ENCODE measurements at regions of chr19 and their contacts with region 1.

Region 1: DNA sequence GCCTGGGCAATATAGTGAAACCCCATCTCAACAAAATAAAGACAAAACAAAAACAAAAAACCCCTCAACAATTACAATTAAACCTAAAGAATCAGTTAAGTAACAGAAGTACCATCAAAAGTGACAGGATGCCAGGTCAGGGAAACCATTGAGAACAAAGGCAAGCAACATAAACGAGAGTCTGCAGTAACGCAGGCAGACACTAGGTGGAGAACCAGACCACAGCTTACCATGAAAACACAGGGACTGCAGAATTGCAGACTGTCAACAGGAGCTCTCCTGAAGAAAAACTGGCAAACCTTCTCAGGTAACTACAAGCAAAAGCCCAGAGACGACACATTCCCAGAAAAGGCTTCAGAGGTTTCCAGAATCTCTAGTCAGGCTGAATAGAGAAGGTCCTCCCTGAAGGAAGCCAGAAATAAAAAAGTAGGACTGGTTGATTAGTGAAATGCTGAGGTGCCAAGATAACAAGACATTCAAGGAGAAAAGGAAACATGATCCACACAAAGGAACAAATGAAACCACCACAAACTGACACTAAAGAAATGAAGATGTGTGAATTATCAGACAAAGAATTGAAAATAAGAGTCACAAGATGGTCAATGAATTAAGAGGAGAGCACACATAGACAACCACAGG is 2.2 kb upstream of the ZNF665 start:
- H3K4me3 Mint-ChIP-seq: no peak overlapping the region
- H3K27ac Mint-ChIP-seq: no peak overlapping the region
- H3K4me1 Mint-ChIP-seq: peaks cover 26% of the 10 kb centered on the region
- H3K27me3 Mint-ChIP-seq: peaks cover 3% of the 10 kb centered on the region

Region 2: GRCh38 chr19:52904052-52904451 is 291.3 kb before region 1 on chr19:
- intact Hi-C with region 1: no loop called
- H3K4me3 Mint-ChIP-seq: no peak overlapping the region
- H3K27ac Mint-ChIP-seq: no peak overlapping the region
- H3K4me1 Mint-ChIP-seq: no peaks in the 10 kb centered on the region
- H3K27me3 Mint-ChIP-seq: no peaks in the 10 kb centered on the region

Region 3: DNA sequence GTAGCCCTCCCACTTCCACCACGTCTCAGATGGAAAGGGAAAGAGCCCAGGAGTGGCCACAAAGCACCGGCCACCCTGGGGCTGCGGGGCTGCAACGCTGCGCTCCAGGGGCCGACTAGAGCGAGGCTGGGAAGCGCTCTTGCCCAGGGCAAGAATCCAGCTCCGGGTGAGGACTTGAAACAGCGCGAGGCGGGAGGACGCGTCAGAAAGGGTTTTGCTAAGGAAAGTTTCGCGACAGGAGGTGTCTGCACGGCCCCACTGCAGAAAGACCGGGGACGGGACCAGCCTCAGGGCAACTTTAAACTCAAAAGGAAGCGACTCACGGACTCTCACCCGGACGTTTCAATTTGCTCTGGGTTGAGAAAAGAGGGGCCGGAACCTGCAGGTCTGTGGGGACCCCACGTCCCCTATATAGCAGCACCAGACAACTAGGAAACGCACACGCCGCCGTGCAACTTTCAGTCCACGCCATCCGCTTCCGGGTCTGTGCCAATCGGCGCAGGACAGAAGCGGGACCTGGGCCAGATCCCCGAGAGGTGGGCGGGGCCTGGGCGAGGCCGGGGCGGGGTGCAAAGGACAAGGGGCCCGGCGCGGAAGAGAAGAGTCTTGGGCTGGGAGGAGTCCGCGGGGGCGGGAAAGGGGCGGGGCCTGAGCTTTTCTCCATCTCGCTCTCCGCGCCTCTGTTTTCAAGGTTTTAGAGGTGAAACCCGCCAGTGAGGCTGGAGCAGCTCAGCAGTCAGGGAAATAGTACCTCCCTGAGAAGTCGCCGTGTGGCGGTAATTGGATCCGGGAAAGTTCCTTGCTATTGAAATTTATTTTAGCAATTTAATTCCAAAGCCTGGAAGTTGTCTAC is 232.8 kb before region 1 on chr19 and contains the start of gene ZNF816:
- intact Hi-C with region 1: loop called (anchors 10 kb)
- H3K4me3 Mint-ChIP-seq: peak within 1 kb of the TSS; percentile 99
- H3K27ac Mint-ChIP-seq: peak within 1 kb of the TSS; percentile 91
- H3K4me1 Mint-ChIP-seq: peaks cover 20% of the 10 kb centered on the region
- H3K27me3 Mint-ChIP-seq: no peaks in the 10 kb centered on the region

Region 4: GRCh38 chr19:53158119-53158656 is 37.2 kb before region 1 on chr19:
- intact Hi-C with region 1: loop called (anchors 5 kb)
- H3K4me3 Mint-ChIP-seq: peak overlapping the region; percentile 80
- H3K27ac Mint-ChIP-seq: peak overlapping the region; percentile 68
- H3K4me1 Mint-ChIP-seq: peaks cover 19% of the 10 kb centered on the region
- H3K27me3 Mint-ChIP-seq: peaks cover 2% of the 10 kb centered on the region

Region 5: GRCh38 chr19:53333463-53334449 is 138.4 kb after region 1 on chr19 and contains the start of gene ZNF845:
- intact Hi-C with region 1: loop called (anchors 10 kb)
- H3K4me3 Mint-ChIP-seq: peak within 1 kb of the TSS; percentile 81
- H3K27ac Mint-ChIP-seq: peak within 1 kb of the TSS; percentile 86
- H3K4me1 Mint-ChIP-seq: peaks cover 17% of the 10 kb centered on the region
- H3K27me3 Mint-ChIP-seq: peaks cover 1% of the 10 kb centered on the region

Region 6: GRCh38 chr19:53394974-53395839 is 199.8 kb after region 1 on chr19 and contains the start of gene ZNF765:
- intact Hi-C with region 1: loop called (anchors 1 kb)
- H3K4me3 Mint-ChIP-seq: peak within 1 kb of the TSS; percentile 91
- H3K27ac Mint-ChIP-seq: peak within 1 kb of the TSS; percentile 86
- H3K4me1 Mint-ChIP-seq: peaks cover 21% of the 10 kb centered on the region
- H3K27me3 Mint-ChIP-seq: no peaks in the 10 kb centered on the region

Region 7: DNA sequence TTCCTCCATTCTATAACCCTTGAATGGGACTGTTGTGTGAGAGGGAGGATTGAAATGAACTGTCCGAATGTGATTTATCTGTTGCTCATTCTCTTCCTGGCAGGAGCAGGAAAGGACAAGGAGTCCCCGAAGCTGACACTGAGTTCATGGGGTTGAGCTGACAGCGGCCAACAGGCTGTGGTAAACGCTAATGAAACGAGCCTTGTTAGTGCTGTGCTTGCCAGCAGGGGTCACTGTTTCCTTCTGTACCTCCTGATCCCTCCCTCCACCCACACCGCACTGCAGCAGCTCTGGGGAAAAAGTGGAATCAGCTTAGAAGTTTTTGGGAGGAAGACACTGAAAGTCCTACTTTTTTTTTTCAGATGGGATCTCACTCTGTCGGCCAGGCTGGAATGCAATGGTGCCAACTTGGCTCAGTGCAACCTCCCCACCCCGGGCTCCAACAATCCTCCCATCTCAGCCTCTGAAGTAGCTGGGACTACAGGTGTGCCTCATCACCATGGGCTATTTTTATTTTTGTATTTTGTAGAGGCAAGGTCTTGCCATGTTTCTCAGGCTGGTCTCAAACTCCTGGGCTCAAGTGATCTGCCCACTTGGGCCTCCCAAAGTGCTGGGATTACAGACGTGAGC is 229.7 kb after region 1 on chr19:
- intact Hi-C with region 1: no loop called
- H3K4me3 Mint-ChIP-seq: no peak overlapping the region
- H3K27ac Mint-ChIP-seq: no peak overlapping the region
- H3K4me1 Mint-ChIP-seq: no peaks in the 10 kb centered on the region
- H3K27me3 Mint-ChIP-seq: peaks cover 2% of the 10 kb centered on the region

Measured in dendritic cell treated with granulocyte-macrophage colony-stimulating factor and Interleukin-4, amounts not matched to agents 40 ng/mL and 50 ng/mL, for 4 days (primary cell).